Activated B cell treated with CpG ODN at 0.5 μM for 24 hours (primary cell): ENCODE measurements at regions of chr1 and their contacts with region 1.

Region 1: DNA sequence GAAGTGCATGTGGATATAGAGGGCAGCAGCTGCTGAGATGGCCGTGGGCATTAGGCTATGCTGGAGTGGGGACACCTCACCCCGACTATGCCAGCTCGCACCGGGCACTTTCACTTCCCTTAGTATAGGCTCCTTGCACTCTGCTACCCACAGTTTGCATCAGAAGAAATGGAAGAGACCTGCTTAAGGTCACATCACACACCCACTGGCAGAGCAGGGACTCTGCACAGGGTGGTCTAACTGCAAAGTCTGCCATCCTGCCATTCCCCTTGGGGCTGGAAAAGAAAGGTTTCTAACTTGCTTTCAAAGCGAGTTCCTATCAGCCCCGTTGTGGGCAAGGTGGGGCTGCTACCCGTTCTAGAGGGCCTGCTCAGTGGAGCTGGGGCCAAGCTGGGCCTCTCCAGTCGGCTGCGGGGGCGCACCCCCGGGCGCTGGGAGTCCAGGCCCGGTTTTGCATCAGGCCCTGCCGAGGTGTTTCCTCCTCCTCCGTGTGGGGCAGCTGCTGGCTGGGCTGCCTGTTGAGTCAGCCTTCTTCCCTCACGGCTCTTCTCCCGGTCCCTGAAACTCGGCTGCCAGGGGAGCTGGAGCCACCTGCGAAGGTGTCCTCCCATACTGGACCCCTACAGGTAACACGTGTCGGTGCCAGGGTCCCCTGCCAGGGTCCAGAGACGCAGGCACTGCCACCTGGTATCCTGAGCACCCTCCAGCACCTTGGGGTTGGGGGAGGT is at the start of gene SYTL1:
- DNase-seq: peak; percentile 72
- ATAC-seq: peak; percentile 76
- H3K4me3 Mint-ChIP-seq: peak within 1 kb of the TSS; percentile 80
- H3K27ac Mint-ChIP-seq: peak within 1 kb of the TSS; percentile 87
- H3K4me1 Mint-ChIP-seq: peaks cover 67% of the 10 kb centered on the region
- H3K27me3 Mint-ChIP-seq: no peaks in the 10 kb centered on the region
- CTCF ChIP-seq: no peak
- total RNA-seq, gene SYTL1: 76.0 and 81.9 TPM in 2 replicates

Region 2: DNA sequence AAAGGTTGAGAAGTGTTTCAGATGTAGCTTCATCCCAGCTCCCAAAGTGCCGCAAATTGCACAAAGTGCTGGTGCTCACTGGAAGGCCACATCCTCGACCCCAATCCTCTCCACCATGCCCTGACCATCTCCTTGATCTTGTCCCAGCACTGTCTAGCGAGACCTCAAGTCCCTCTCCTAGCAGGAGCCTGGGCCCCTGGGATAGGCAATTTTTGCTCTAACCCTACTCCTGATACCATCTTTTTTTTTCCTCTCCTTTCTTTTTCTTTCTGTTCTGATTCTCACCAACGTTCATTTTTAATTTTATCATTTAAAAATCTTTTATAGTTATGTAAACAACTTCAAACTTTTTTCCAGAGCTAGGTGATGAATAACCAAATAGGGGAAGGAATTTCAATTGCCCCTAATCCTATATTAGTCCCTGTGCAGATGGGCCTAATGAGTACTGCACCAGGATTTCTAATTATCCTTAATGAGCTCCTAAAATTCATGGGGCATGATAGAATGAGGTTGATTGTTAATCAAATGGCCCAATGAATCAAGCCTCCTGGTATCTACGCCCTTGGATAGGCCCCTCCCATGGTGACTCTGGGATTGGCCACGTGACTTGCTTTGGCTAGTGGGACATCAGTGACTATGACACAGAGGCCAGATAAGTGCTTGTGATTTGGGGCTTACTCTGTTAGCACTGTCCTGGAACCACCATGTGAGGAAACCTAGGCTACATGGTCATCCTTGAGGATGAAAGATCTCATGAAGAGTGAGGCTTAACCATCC is 287.5 kb before region 1 on chr1:
- CTCF ChIA-PET with region 1: no interaction called
- POLR2A ChIA-PET with region 1: interaction called, 10 read pairs
- intact Hi-C with region 1: no loop called
- DNase-seq: no peak
- ATAC-seq: no peak
- H3K4me3 Mint-ChIP-seq: no peak overlapping the region
- H3K27ac Mint-ChIP-seq: no peak overlapping the region
- H3K4me1 Mint-ChIP-seq: no peaks in the 10 kb centered on the region
- H3K27me3 Mint-ChIP-seq: no peaks in the 10 kb centered on the region
- CTCF ChIP-seq: no peak

Region 3: DNA sequence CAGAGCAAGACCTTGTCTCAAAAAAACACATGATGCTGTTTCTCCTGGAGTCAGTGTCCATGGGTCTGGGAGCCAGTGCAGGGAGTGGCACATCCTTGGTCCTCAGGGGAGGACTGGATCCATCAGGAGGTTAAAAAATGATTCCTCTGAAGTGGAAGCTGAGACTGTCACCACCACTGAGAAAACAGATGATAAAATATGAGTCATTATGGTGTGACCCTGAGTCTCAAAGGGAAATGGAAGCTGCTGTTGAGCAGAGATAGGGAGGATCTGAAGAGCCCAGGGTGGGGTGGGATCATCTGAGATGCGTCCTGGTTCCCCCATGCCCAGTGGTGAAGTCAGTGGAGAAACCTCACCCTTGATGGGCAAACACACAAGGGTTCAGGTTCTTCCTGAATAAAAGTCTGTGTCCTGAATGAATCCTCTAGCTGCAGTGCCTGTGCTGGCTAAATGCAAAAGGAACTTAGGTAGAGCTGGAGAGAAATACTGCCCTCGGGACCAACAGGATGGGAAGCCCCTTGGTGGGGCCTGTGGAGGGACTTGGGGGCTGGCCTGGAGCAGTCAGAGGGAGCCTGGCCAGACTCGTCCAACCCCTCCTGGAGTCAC is 267.4 kb before region 1 on chr1:
- CTCF ChIA-PET with region 1: no interaction called
- POLR2A ChIA-PET with region 1: no interaction called
- intact Hi-C with region 1: no loop called
- DNase-seq: no peak
- ATAC-seq: no peak
- H3K4me3 Mint-ChIP-seq: no peak overlapping the region
- H3K27ac Mint-ChIP-seq: no peak overlapping the region
- H3K4me1 Mint-ChIP-seq: no peaks in the 10 kb centered on the region
- H3K27me3 Mint-ChIP-seq: peaks cover 10% of the 10 kb centered on the region
- CTCF ChIP-seq: no peak

Region 4: GRCh38 chr1:27752360-27752759 is 410.7 kb after region 1 on chr1:
- CTCF ChIA-PET with region 1: no interaction called
- POLR2A ChIA-PET with region 1: no interaction called
- intact Hi-C with region 1: no loop called
- DNase-seq: no peak
- ATAC-seq: no peak
- H3K4me3 Mint-ChIP-seq: no peak overlapping the region
- H3K27ac Mint-ChIP-seq: no peak overlapping the region
- H3K4me1 Mint-ChIP-seq: peaks cover 2% of the 10 kb centered on the region
- H3K27me3 Mint-ChIP-seq: no peaks in the 10 kb centered on the region
- CTCF ChIP-seq: no peak